Posterior vena cava (tissue), 2 donors: ENCODE measurements at regions of chr20 and their contacts with region 1.

Region 1: GRCh38 chr20:13870170-13870748 is 85.4 kb downstream of the NDUFAF5 start:
- DNase-seq: no peak

Region 2: GRCh38 chr20:13546497-13547131 is 323.6 kb before region 1 on chr20:
- intact Hi-C with region 1: no loop called
- DNase-seq: peak; percentile 91

Region 3: DNA sequence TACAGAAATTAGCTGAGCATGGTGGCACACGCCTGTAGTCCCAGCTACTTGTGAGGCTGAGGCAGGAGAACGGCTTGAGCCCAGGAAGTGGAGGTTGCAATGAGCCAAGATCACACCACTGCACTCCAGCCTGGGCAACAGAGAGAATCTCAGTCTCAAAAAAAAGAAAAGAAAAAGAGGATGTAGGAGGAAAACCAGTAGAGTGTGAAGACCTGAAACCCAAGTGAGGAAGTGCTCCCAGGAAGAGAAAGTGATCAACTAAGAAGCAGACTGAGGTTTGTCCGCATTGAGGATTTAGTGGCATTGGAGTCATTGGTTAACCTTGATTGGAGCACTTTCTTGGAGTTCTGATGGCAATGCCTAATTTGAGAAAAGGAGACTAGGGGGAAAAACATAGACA is 211.0 kb before region 1 on chr20:
- intact Hi-C with region 1: no loop called
- DNase-seq: no peak

Region 4: GRCh38 chr20:13930281-13930680 is 60.0 kb after region 1 on chr20:
- intact Hi-C with region 1: loop called in 1 of 2 experiments (anchors 10 kb)
- DNase-seq: no peak

Region 5: DNA sequence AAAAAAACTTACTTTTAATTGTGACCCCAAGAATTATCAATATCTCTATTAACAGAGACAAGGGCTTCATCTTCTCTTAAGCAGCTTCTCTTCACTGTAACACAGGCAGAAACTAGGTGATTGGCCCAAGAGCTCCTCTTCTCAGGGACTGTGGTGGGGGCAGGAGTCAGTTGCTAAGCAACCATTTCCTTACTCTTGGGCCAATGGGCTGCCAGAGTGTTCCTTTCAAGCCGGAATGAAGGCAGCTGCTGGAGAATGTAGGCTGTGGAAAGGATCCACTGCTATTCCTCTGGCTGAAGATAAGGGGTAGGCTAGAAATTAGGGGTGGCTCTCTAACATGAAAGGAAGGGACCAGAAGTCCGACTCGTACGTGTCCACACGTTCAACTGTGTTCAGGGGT is 120.2 kb after region 1 on chr20 and contains the start of gene SEL1L2:
- intact Hi-C with region 1: no loop called
- DNase-seq: no peak
- total RNA-seq, gene SEL1L2: 6.0 to 16.1 TPM